ENCODE measurements at regions of chr6 and their contacts with region 1.

Region 1: DNA sequence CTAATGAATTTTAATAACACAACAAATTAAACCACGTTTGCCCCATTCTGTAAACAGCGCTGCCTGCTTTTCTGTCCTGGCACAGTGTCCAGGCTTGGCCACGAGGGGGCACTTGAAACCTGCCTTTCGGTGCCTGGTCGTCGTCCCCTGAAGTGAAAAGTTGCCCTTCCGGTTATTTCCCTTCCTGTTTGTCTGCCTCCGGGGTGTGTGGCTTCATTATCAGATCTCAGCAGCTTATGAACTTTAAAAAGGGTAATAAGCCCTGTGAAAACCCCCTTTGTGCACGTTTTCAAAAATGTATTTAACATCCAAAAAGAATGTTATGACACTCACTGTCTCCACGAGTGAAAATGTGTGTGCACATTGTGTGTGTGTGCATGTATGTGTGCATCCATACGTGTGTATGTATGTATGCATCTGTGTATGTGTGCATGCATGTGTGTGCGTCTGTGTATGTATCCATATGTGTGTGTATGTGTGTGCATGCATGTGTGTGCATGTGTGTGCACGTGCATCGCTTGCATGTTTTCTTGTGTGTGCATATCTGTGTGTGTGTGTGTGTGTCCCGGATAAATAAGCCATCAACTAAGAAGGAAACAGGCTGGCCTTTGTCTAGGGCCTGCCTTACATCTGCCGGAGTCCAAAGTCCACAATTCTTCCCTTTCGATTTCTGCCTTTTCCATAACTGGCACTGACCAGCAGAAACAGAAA is 358.4 kb downstream of the THBS2 start:
- DNase-seq: peak; percentile 75 to 79
- ATAC-seq: peak; percentile 77 to 87 (median 82)
- H3K4me3 ChIP-seq: peak overlapping the region in 4 of 10 donors; percentile 5 to 28 (median 16)
- H3K27ac ChIP-seq: no peak overlapping the region
- H3K4me1 ChIP-seq: peaks cover 0 to 16% (median 0%) of the 10 kb centered on the region in 9 donors
- H3K27me3 ChIP-seq: peaks cover 0 to 5% (median 0%) of the 10 kb centered on the region in 7 donors
- CTCF ChIP-seq: peak; percentile 67 to 95 (median 90)

Region 2: GRCh38 chr6:169079650-169080049 is 184.4 kb after region 1 on chr6:
- intact Hi-C with region 1: no loop called
- DNase-seq: no peak
- ATAC-seq: no peak
- H3K4me3 ChIP-seq: no peak overlapping the region
- H3K27ac ChIP-seq: no peak overlapping the region
- H3K4me1 ChIP-seq: peaks cover 0 to 7% (median 3%) of the 10 kb centered on the region in 9 donors
- H3K27me3 ChIP-seq: no peaks in the 10 kb centered on the region
- CTCF ChIP-seq: no peak

Region 3: GRCh38 chr6:169529931-169530751 is 634.9 kb after region 1 on chr6:
- intact Hi-C with region 1: loop called in 1 of 10 experiments (anchors 10 kb)
- DNase-seq: no peak
- ATAC-seq: peak in 7 of 8 donors; percentile 38 to 88 (median 69)
- H3K4me3 ChIP-seq: no peak overlapping the region
- H3K27ac ChIP-seq: peak overlapping the region in 2 of 10 donors; percentile 26 to 57
- H3K4me1 ChIP-seq: peaks cover 0 to 13% (median 4%) of the 10 kb centered on the region in 9 donors
- H3K27me3 ChIP-seq: no peaks in the 10 kb centered on the region
- CTCF ChIP-seq: no peak

Region 4: DNA sequence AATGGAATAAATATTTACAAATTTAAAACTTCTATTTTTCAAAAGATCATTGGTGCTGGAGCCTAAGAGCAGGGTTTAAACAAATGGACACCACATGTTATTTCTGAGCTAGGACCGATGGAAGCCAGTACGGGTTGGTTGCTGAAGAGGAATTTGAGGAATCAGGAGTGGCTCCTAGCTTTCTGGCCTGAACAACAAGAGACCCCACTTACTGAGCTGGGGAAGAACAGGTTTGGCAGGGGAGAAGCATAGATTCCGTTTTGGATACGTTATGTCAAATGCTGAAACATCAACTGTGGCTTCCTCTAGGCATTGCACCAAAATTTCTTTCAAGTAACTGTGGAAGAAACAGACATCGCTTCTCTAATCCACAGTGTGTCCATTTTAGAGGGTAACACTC is 799.9 kb after region 1 on chr6:
- intact Hi-C with region 1: loop called in 1 of 10 experiments (anchors 5 kb)
- DNase-seq: no peak
- ATAC-seq: no peak
- H3K4me3 ChIP-seq: no peak overlapping the region
- H3K27ac ChIP-seq: no peak overlapping the region
- H3K4me1 ChIP-seq: peaks cover 0 to 17% (median 3%) of the 10 kb centered on the region in 9 donors
- H3K27me3 ChIP-seq: no peaks in the 10 kb centered on the region
- CTCF ChIP-seq: no peak